ENCODE measurements at regions of chr10 and their contacts with region 1.

Region 1: GRCh38 chr10:22620140-22620857 is 94.1 kb downstream of the PIP4K2A start:
- DNase-seq: peak; percentile 95
- ATAC-seq: peak; percentile 83
- H3K4me3 ChIP-seq: peak overlapping the region; percentile 20; the same call in 1 of the 2 replicates
- H3K27ac ChIP-seq: peak overlapping the region; percentile 97
- H3K4me1 ChIP-seq: peaks cover 94% of the 10 kb centered on the region
- H3K27me3 ChIP-seq: no peaks in the 10 kb centered on the region
- CTCF ChIP-seq: no peak

Region 2: DNA sequence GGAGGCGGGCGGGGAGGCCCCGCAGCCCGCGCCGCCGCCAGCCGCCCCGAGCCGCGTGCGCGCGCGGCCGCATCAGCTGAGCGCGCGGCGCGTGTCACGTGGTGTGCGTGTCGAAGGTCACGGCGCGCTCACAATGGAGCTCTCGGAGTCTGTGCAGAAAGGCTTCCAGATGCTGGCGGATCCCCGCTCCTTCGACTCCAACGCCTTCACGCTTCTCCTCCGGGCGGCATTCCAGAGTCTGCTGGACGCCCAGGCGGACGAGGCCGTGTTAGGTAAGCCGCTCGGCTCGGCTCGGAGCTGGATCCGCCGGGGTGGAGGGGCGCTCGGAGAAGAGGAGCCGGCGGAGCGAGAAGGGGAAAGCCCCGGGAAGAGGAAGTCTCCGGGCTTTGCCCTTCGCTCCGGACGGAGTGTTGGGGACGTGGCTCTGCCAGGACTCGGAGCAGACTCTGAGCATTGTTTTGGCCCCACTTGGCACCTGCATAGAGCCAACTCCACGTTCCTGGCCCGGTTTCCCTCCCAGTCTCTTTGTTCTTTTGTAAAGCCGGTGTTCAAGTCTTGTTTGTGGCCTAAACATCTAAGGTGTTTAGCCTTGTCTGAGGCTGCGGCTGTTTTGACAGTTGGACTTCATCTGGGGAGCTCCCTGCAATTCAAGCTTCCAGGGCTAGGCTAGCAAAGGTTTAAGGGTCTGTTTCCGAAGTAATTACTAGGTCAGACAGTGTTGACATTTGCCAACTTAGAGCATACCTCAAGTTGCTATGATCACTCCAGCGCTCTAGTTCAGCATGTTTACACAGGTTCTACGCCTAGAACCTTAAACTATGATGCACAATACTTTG is 303.8 kb before region 1 on chr10 and contains the start of gene COMMD3:
- CTCF ChIA-PET with region 1: no interaction called
- POLR2A ChIA-PET with region 1: no interaction called
- intact Hi-C with region 1: loop called (anchors 5 kb)
- DNase-seq: peak; percentile 82
- ATAC-seq: peak; percentile 50
- H3K4me3 ChIP-seq: peak within 1 kb of the TSS; percentile 92
- H3K27ac ChIP-seq: peak within 1 kb of the TSS; percentile 99
- H3K4me1 ChIP-seq: peaks cover 37% of the 10 kb centered on the region
- H3K27me3 ChIP-seq: no peaks in the 10 kb centered on the region
- CTCF ChIP-seq: no peak
- total RNA-seq, gene COMMD3: 86.4 and 86.6 TPM in 2 replicates

Region 3: GRCh38 chr10:22436884-22437619 is 183.2 kb before region 1 on chr10:
- CTCF ChIA-PET with region 1: no interaction called
- POLR2A ChIA-PET with region 1: no interaction called
- intact Hi-C with region 1: loop called (anchors 2 kb)
- DNase-seq: peak; percentile 80
- ATAC-seq: peak; percentile 64
- H3K4me3 ChIP-seq: peak overlapping the region; percentile 93
- H3K27ac ChIP-seq: peak overlapping the region; percentile 95
- H3K4me1 ChIP-seq: peaks cover 50% of the 10 kb centered on the region
- H3K27me3 ChIP-seq: no peaks in the 10 kb centered on the region
- CTCF ChIP-seq: 0 out of 2 replicates have a peak, but pooled peaks have one; percentile 10

Region 4: GRCh38 chr10:22597138-22597537 is 23.2 kb before region 1 on chr10:
- CTCF ChIA-PET with region 1: no interaction called
- POLR2A ChIA-PET with region 1: interaction called, 4 read pairs
- intact Hi-C with region 1: loop called (anchors 1 kb)
- DNase-seq: no peak
- ATAC-seq: no peak
- H3K4me3 ChIP-seq: no peak overlapping the region
- H3K27ac ChIP-seq: no peak overlapping the region
- H3K4me1 ChIP-seq: peaks cover 38% of the 10 kb centered on the region
- H3K27me3 ChIP-seq: no peaks in the 10 kb centered on the region
- CTCF ChIP-seq: no peak

Region 5: DNA sequence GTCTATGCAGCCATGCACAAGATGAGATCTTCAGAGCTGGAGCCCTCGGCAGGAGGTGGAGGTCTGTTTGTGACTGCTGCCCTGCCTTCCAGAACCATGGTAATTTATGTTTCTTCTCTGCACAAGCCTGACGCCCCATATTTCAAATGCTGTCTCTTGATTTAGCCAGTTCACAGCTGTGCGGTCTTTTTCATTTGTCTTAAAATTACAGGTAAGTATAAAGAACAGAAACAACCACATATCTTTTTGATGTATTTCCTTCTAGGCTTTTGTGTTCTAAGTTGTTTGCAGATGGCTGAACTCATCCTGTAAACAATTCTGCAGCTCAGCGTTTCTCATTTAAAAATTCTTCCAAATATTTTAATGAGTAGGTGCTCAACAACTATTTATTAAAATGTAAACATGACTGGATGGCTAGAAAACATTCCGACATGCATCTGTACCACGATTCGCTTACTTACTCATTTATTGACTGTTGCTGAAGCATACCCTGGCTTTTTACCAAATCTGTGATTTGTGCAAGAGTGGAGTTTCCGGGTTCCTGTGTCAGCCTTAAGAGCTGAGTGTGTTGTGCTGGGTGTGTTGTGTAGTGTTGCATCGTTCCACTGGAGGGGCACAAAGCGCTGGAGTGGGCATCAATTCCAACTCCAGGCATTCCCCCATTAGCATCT is 35.1 kb after region 1 on chr10:
- CTCF ChIA-PET with region 1: no interaction called
- POLR2A ChIA-PET with region 1: no interaction called
- intact Hi-C with region 1: loop called (anchors 1 kb)
- DNase-seq: peak; percentile 93
- ATAC-seq: peak; percentile 87
- H3K4me3 ChIP-seq: peak overlapping the region; percentile 60
- H3K27ac ChIP-seq: peak overlapping the region; percentile 88
- H3K4me1 ChIP-seq: peaks cover 49% of the 10 kb centered on the region
- H3K27me3 ChIP-seq: no peaks in the 10 kb centered on the region
- CTCF ChIP-seq: no peak; the same call in 1 of the 2 replicates

Region 6: DNA sequence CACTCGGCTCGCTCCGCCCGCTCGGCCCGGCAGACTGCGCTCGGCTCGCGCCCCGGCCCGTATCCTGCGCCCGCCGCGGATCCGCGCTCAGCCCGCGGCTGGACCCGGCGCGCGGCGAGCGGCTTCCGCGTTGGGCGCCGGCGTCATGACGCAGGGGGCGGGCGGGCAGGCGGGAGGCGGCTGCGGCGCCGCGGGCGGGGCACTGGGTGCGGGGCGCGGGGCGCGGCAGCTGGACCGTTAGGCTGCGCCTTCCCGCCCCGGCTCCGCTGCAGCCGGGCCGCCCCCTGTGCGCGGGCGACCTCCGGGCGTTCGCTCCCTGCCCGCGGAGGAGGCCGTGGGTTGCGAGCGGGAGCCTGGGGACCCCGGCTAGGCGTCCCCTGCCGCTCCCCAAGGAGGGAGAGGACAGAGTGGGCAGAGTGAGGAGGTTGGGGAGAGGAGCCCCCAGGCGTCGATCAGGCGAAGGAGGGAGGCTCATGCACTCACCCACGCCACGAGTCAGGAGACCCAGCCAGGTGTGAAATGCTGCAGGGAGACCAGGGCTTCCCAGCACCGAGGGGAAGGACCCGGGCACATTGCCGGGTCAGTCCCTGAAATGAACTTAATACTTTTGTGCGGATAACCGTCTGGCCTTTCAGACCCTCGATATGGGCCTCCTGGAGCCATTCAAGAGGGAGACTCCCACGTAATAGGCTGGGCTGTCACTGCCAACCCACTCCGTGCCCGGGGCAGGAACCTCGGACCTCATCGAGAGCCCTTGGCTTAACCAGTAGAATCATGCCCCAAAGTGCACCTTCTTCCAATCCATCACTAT is 94.4 kb after region 1 on chr10 and contains the start of gene PIP4K2A:
- CTCF ChIA-PET with region 1: no interaction called
- POLR2A ChIA-PET with region 1: no interaction called
- intact Hi-C with region 1: loop called (anchors 2 kb)
- DNase-seq: peak; percentile 72
- ATAC-seq: peak; percentile 81
- H3K4me3 ChIP-seq: peak within 1 kb of the TSS; percentile 92
- H3K27ac ChIP-seq: no peak within 1 kb of the TSS
- H3K4me1 ChIP-seq: peaks cover 13% of the 10 kb centered on the region
- H3K27me3 ChIP-seq: no peaks in the 10 kb centered on the region
- CTCF ChIP-seq: no peak
- total RNA-seq, gene PIP4K2A: 20.2 and 22.6 TPM in 2 replicates

Region 7: DNA sequence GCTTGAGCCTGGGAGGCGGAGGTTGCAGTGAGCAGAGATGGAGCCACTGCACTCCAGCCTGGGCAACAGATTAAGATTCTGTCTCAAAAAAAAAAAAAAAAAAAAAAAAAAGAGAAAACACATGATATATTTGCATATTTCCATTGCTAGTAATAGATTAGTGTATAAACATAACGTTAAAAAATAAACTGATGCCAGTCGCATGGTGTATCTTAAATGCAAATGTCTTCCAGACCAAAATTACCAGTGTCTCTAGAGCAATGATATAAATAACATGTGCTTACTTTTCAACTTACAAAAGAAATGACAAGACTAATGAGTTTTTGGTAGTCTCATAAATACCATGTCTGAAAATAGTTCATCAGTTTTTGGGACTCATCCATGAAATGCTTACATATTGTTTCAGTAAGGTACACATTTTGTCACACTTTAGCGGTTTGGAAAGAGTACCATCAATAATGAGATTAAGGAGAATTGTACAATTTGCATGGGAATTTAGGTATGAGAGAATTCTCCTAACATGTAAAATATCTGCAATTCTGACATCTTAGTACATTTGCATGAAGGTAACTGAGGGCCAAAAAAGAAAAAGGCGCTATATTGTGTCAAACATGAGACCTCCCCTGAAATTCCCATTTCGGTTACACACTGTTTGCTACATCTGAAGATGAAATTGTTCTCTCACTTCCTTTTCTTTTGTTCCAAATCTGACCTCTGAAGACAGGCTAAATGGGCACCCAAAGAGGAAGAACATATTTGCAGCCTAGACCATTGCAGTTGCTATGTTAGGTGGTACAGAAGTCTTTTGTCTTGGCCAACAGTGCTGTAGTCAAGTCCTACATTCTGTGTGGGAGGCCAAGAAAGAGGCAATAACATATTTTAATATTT is 145.6 kb after region 1 on chr10:
- CTCF ChIA-PET with region 1: no interaction called
- POLR2A ChIA-PET with region 1: no interaction called
- intact Hi-C with region 1: no loop called
- DNase-seq: no peak
- ATAC-seq: no peak
- H3K4me3 ChIP-seq: no peak overlapping the region
- H3K27ac ChIP-seq: no peak overlapping the region
- H3K4me1 ChIP-seq: no peaks in the 10 kb centered on the region
- H3K27me3 ChIP-seq: no peaks in the 10 kb centered on the region
- CTCF ChIP-seq: no peak

Region 8: DNA sequence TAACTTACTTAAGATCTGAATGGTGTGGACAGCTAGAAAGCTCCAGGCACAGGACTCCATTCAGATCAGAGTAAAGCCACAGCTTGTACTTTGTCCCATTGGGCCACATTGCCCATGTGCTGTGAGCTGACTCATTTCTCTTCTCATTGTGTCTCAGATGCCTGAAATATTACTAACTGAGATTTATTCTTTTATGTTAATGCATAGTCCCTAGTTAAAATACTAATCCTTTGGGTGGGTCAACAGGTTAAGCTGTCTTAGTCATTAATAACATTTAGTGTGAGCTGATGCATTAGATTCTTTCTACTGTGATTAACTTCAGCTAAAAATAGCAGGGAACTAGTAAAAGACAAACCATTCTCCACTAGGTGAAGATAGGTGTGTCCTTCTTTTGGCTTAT is 202.8 kb after region 1 on chr10:
- CTCF ChIA-PET with region 1: interaction called, 3 read pairs
- POLR2A ChIA-PET with region 1: no interaction called
- intact Hi-C with region 1: loop called (anchors 2 kb)
- DNase-seq: peak; percentile 90
- ATAC-seq: peak; percentile 85
- H3K4me3 ChIP-seq: no peak overlapping the region
- H3K27ac ChIP-seq: peak overlapping the region; percentile 89
- H3K4me1 ChIP-seq: peaks cover 50% of the 10 kb centered on the region
- H3K27me3 ChIP-seq: no peaks in the 10 kb centered on the region
- CTCF ChIP-seq: no peak

Region 9: GRCh38 chr10:23015021-23015707 is 394.9 kb after region 1 on chr10:
- CTCF ChIA-PET with region 1: no interaction called
- POLR2A ChIA-PET with region 1: no interaction called
- intact Hi-C with region 1: no loop called
- DNase-seq: no peak
- ATAC-seq: no peak
- H3K4me3 ChIP-seq: no peak overlapping the region
- H3K27ac ChIP-seq: no peak overlapping the region
- H3K4me1 ChIP-seq: no peaks in the 10 kb centered on the region
- H3K27me3 ChIP-seq: 0 out of 2 replicates have a peak, but pooled peaks cover 6% of the 10 kb centered on the region
- CTCF ChIP-seq: no peak

Measured in PC-3 (cell line).